ENCODE measurements at regions of chr14 and their contacts with region 1.

Region 1: GRCh38 chr14:87944987-87945604 is 47.9 kb downstream of the GALC start:
- DNase-seq: peak in 6 of 9 donors; percentile 28 to 53 (median 42)
- ATAC-seq: peak; percentile 79
- H3K4me3 ChIP-seq: no peak overlapping the region
- H3K4me3 Mint-ChIP-seq: no peak overlapping the region
- H3K27ac ChIP-seq: no peak overlapping the region
- H3K27ac Mint-ChIP-seq: no peak overlapping the region
- H3K4me1 ChIP-seq: no peaks in the 10 kb centered on the region
- H3K4me1 Mint-ChIP-seq: peaks cover 0 to 8% (median 6%) of the 10 kb centered on the region in 7 donors
- H3K27me3 ChIP-seq: no peaks in the 10 kb centered on the region
- H3K27me3 Mint-ChIP-seq: no peaks in the 10 kb centered on the region

Region 2: DNA sequence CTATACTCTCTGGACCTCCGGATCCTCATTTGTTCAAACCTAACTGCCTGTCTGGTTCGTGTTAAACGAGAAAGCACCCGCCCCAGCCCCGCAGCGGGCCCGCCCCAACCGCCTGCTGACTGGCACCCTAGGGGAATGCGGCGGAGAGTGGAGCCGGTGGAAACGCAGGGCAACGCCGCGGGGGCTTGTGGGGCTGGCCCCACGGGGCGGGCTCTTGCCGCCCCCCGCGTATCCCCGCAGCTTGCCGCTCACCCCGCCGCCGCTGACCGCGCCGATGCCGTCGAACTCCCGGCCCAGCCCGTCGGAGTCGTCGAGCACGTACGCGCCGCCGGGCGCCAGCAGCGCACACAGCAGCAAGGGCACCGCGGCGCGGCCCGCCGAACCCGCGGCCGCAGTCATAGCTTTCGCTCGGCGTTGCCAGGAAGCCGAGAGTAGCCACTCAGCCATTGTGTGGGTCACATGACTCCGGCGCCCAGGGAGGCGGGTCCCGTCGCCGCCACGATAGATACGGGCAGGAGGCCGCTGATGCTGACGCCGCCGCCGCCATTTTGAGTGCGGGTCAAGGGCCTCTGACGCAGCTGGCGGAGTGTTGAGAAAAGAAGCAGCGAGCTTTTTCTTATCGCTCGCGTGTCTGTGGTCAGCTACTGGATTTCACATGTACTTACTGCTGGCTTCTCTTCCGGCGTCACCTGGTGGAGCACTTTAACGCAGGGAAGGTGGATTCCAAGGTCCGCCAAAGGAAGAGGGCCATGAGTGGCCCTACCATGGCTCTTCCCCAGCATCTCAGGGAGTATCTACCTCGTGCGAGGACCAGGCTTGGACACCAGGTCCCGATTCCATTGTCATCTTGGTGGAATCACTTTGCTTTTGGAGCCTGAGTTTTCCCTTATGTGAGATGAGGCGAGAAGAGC is 47.9 kb after region 1 on chr14 and contains the start of gene GALC:
- CTCF ChIA-PET with region 1: no interaction called
- POLR2A ChIA-PET with region 1: interaction called, 4 read pairs
- intact Hi-C with region 1: loop called (anchors 1 to 5 kb)
- DNase-seq: peak; percentile 90 to 93 (median 92)
- ATAC-seq: peak; percentile 88
- H3K4me3 ChIP-seq: peak within 1 kb of the TSS; percentile 62
- H3K4me3 Mint-ChIP-seq: peak within 1 kb of the TSS; percentile 88 to 98 (median 94)
- H3K27ac ChIP-seq: peak within 1 kb of the TSS; percentile 94
- H3K27ac Mint-ChIP-seq: peak within 1 kb of the TSS; percentile 89 to 100 (median 99)
- H3K4me1 ChIP-seq: peaks cover 16 to 39% of the 10 kb centered on the region in 2 donors
- H3K4me1 Mint-ChIP-seq: peaks cover 40 to 74% (median 70%) of the 10 kb centered on the region in 7 donors
- H3K27me3 ChIP-seq: no peaks in the 10 kb centered on the region
- H3K27me3 Mint-ChIP-seq: no peaks in the 10 kb centered on the region
- total RNA-seq, gene GALC: 17.8 to 26.1 (median 22.3) TPM

Region 3: DNA sequence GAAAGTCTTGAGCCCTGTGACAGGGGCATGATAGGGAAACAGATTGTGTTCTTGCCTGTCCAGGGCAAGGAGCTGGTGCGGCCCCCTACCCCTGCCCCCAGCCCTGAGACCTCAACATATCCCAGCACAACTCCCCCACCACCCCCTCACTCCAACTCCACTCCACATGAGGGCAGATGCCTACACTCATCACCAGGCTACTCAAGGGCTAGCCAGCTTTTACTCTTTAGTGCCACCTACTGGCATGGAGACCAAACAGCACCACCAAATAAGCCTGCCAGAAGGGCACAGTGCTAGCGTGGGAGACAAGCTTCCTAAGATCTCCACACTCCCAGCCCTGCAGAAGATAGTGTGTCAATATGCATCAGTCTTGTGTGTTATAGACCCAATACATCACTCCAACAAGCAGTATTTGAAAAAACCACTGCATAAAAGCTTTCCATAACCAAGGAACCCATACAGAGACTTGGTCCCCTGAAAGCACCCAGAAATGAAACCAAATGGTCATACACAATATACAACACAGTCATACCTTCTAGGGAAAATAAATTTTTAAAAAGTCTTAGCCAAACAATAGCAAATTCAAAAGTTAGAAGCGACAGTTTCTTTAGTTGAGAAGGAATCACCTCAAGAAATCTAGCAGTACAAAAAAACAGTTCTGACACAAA is 223.5 kb after region 1 on chr14:
- CTCF ChIA-PET with region 1: interaction called, 31 read pairs
- POLR2A ChIA-PET with region 1: no interaction called
- intact Hi-C with region 1: loop called (anchors 1 kb)
- DNase-seq: peak; percentile 18 to 69 (median 47)
- ATAC-seq: peak; percentile 94
- H3K4me3 ChIP-seq: no peak overlapping the region
- H3K4me3 Mint-ChIP-seq: peak overlapping the region in 1 of 10 donors; percentile 5
- H3K27ac ChIP-seq: no peak overlapping the region
- H3K27ac Mint-ChIP-seq: peak overlapping the region in 1 of 9 donors; percentile 21
- H3K4me1 ChIP-seq: no peaks in the 10 kb centered on the region
- H3K4me1 Mint-ChIP-seq: peaks cover 0 to 14% (median 0%) of the 10 kb centered on the region in 7 donors
- H3K27me3 ChIP-seq: no peaks in the 10 kb centered on the region
- H3K27me3 Mint-ChIP-seq: peaks cover 9 to 41% (median 19%) of the 10 kb centered on the region in 5 donors

Region 4: DNA sequence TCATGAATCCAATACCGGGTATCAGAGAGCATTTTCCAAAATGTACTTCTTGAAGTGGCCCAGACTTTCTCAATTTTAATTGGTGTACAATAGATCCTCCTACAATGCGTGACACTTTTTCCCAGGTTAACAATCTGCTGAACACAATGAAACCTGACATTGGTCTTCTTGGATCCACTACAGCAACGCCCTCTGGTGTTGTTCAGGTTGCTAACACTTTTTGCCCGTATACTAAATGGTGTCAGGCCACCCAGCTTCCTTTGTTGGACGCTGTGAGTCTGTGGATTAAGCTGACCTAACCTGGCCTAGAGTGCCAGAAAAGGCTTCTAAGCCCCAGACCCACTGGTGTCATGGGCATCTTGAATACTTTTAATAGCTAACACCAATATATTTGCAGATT is 288.8 kb after region 1 on chr14:
- CTCF ChIA-PET with region 1: interaction called, 3 read pairs
- POLR2A ChIA-PET with region 1: no interaction called
- intact Hi-C with region 1: loop called in 1 of 2 experiments (anchors 2 kb)
- DNase-seq: no peak
- ATAC-seq: no peak
- H3K4me3 ChIP-seq: no peak overlapping the region
- H3K4me3 Mint-ChIP-seq: no peak overlapping the region
- H3K27ac ChIP-seq: no peak overlapping the region
- H3K27ac Mint-ChIP-seq: no peak overlapping the region
- H3K4me1 ChIP-seq: no peaks in the 10 kb centered on the region
- H3K4me1 Mint-ChIP-seq: peaks cover 0 to 4% (median 0%) of the 10 kb centered on the region in 7 donors
- H3K27me3 ChIP-seq: no peaks in the 10 kb centered on the region
- H3K27me3 Mint-ChIP-seq: peaks cover 9 to 26% (median 16%) of the 10 kb centered on the region in 5 donors

Region 5: GRCh38 chr14:88492272-88493089 is 547.4 kb after region 1 on chr14:
- CTCF ChIA-PET with region 1: no interaction called
- POLR2A ChIA-PET with region 1: no interaction called
- intact Hi-C with region 1: loop called in 1 of 2 experiments (anchors 1 kb)
- DNase-seq: peak in 8 of 9 donors; percentile 36 to 73 (median 58)
- ATAC-seq: peak; percentile 90
- H3K4me3 ChIP-seq: no peak overlapping the region
- H3K4me3 Mint-ChIP-seq: no peak overlapping the region
- H3K27ac ChIP-seq: no peak overlapping the region
- H3K27ac Mint-ChIP-seq: no peak overlapping the region
- H3K4me1 ChIP-seq: no peaks in the 10 kb centered on the region
- H3K4me1 Mint-ChIP-seq: peaks cover 0 to 7% (median 0%) of the 10 kb centered on the region in 7 donors
- H3K27me3 ChIP-seq: no peaks in the 10 kb centered on the region
- H3K27me3 Mint-ChIP-seq: peaks cover 0 to 6% (median 4%) of the 10 kb centered on the region in 5 donors

Region 6: DNA sequence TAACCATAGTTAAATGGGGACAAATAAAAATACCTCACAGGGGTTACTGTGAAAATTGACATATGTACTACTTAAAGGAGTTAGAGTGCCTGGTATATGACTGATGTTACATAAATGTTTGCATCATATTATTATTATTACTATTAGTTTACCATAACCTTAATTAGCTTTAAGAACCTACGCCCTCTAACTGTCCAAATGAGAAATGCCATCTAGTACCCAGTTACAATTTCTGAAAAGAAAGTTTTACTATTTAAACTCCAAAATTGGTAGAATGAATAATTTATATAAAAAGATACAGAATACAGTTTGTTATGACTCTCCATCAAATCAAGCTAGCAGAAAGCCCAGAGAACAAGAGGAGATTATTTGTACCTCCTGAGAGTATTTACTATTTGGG is 805.3 kb after region 1 on chr14:
- CTCF ChIA-PET with region 1: no interaction called
- POLR2A ChIA-PET with region 1: no interaction called
- intact Hi-C with region 1: no loop called
- DNase-seq: no peak
- ATAC-seq: no peak
- H3K4me3 ChIP-seq: no peak overlapping the region
- H3K4me3 Mint-ChIP-seq: no peak overlapping the region
- H3K27ac ChIP-seq: no peak overlapping the region
- H3K27ac Mint-ChIP-seq: no peak overlapping the region
- H3K4me1 ChIP-seq: no peaks in the 10 kb centered on the region
- H3K4me1 Mint-ChIP-seq: peaks cover 0 to 2% (median 0%) of the 10 kb centered on the region in 7 donors
- H3K27me3 ChIP-seq: no peaks in the 10 kb centered on the region
- H3K27me3 Mint-ChIP-seq: no peaks in the 10 kb centered on the region